ENCODE measurements at regions of chr7 and their contacts with region 1.

Region 1: DNA sequence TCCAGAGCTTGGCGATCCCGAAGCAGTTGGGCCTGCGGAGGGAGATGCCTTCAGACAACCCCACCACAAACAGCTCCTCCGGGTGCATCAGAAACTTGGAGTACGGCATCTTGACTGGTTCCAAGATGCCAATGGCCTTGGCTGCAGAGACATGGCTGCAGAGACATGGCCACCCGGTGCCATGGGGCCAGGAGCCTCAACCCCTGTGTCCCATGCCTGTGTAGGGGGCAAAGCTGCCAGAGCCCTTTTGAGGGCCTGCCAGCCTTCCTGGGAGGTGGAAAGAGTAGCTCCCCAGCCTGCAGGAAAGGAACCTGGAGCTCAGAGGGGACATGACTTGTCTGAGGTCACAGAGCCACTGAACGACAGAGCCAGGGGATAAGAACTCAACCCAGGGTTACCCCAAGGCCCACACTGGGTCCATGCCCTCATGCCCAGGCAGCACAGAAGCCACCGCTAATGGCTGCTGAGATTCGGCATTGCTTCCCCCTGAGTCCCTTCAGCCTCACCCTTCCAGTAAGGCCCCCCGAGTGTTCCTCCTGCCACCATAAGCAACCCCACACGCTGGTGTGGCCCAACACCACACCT is 83.6 kb downstream of the RABGEF1 start:
- DNase-seq: no peak
- H3K4me3 Mint-ChIP-seq: no peak overlapping the region
- H3K27ac Mint-ChIP-seq: no peak overlapping the region
- H3K4me1 Mint-ChIP-seq: no peaks in the 10 kb centered on the region
- H3K27me3 Mint-ChIP-seq: no peaks in the 10 kb centered on the region
- CTCF ChIP-seq: no peak

Region 2: GRCh38 chr7:66379761-66380160 is 444.4 kb before region 1 on chr7:
- CTCF ChIA-PET with region 1: interaction called, 11 read pairs
- intact Hi-C with region 1: no loop called
- DNase-seq: no peak
- H3K4me3 Mint-ChIP-seq: no peak overlapping the region
- H3K27ac Mint-ChIP-seq: no peak overlapping the region
- H3K4me1 Mint-ChIP-seq: no peaks in the 10 kb centered on the region
- H3K27me3 Mint-ChIP-seq: no peaks in the 10 kb centered on the region
- CTCF ChIP-seq: no peak

Measured in Calu3 (cell line).